PC-3 (cell line): ENCODE measurements at regions of chr14 and their contacts with region 1.

Region 1: GRCh38 chr14:51828017-51828797 is 32.2 kb upstream of the GNG2 start:
- DNase-seq: peak; percentile 94
- ATAC-seq: peak; percentile 98
- H3K4me3 ChIP-seq: peak overlapping the region; percentile 54; the same call in 1 of the 2 replicates
- H3K27ac ChIP-seq: peak overlapping the region; percentile 95
- H3K4me1 ChIP-seq: peaks cover 31% of the 10 kb centered on the region
- H3K27me3 ChIP-seq: no peaks in the 10 kb centered on the region
- CTCF ChIP-seq: peak; percentile 22; the same call in 1 of the 2 replicates

Region 2: DNA sequence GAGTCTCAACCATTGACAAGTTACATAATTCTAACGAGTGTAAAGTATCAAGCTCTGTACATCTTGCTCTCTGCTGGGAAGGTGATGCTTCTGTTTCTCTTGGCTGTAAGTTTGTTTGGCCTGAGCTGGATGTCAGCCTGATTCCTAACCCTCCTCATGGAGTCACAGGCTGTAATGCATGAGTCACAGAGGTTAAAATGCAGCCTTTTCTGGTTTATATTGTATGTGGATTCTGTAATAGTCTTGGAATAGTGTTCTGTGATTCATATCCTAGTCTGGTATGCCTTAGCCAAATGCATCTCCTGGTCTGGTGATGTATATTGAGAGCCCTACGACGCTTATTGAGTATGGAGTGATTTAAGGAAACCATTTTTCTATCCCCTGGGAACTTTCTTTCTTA is 280.9 kb before region 1 on chr14:
- CTCF ChIA-PET with region 1: no interaction called
- POLR2A ChIA-PET with region 1: interaction called, 14 read pairs
- intact Hi-C with region 1: no loop called
- DNase-seq: peak; percentile 99
- ATAC-seq: peak; percentile 93
- H3K4me3 ChIP-seq: peak overlapping the region; percentile 9; the same call in 1 of the 2 replicates
- H3K27ac ChIP-seq: peak overlapping the region; percentile 91
- H3K4me1 ChIP-seq: peaks cover 54% of the 10 kb centered on the region
- H3K27me3 ChIP-seq: no peaks in the 10 kb centered on the region
- CTCF ChIP-seq: no peak

Region 3: GRCh38 chr14:51677266-51677665 is 150.9 kb before region 1 on chr14:
- CTCF ChIA-PET with region 1: no interaction called
- POLR2A ChIA-PET with region 1: no interaction called
- intact Hi-C with region 1: no loop called
- DNase-seq: no peak
- ATAC-seq: no peak
- H3K4me3 ChIP-seq: no peak overlapping the region
- H3K27ac ChIP-seq: no peak overlapping the region
- H3K4me1 ChIP-seq: peaks cover 20% of the 10 kb centered on the region; the same call in 1 of the 2 replicates
- H3K27me3 ChIP-seq: no peaks in the 10 kb centered on the region
- CTCF ChIP-seq: no peak

Region 4: DNA sequence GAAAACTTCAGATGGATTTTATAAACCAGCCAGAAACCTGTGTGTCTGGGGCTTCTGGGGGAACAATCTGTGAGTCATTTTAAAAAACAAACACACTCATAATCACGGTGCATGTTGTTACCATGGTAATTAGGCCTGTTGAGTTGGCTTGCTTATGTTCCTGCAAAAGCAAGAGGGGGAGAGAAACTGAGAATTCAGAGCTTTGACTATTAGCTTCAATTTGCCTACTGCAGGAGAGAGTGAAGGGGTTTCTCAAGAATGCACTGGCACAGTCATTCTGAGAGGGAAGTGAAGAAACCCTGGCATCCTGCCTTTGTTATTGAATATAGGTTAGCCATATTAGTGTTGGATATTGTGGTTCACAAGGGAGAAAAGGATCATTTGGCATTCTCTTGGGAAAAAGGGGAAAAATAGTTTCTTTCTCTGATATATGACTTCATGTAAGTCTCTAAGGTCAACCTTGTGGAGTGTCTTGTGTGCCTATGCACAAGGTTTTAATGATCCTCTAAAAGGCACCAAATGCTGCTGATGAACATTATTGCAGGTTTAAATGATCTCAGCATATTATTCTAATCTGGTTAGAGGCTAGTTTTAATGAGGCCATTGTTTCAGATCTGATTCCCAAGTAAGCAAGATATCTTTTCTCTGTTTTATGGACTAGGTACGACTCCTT is 45.1 kb after region 1 on chr14:
- CTCF ChIA-PET with region 1: interaction called, 6 read pairs
- POLR2A ChIA-PET with region 1: interaction called, 3 read pairs
- intact Hi-C with region 1: loop called (anchors 1 kb)
- DNase-seq: peak; percentile 97
- ATAC-seq: peak; percentile 93
- H3K4me3 ChIP-seq: peak overlapping the region; percentile 20; the same call in 1 of the 2 replicates
- H3K27ac ChIP-seq: peak overlapping the region; percentile 92
- H3K4me1 ChIP-seq: peaks cover 26% of the 10 kb centered on the region
- H3K27me3 ChIP-seq: no peaks in the 10 kb centered on the region
- CTCF ChIP-seq: no peak

Region 5: GRCh38 chr14:51979088-51979709 is 151.0 kb after region 1 on chr14:
- CTCF ChIA-PET with region 1: interaction called, 19 read pairs
- POLR2A ChIA-PET with region 1: no interaction called
- intact Hi-C with region 1: loop called (anchors 1 kb)
- DNase-seq: peak; percentile 93
- ATAC-seq: peak; percentile 96
- H3K4me3 ChIP-seq: no peak overlapping the region
- H3K27ac ChIP-seq: no peak overlapping the region
- H3K4me1 ChIP-seq: no peaks in the 10 kb centered on the region
- H3K27me3 ChIP-seq: no peaks in the 10 kb centered on the region
- CTCF ChIP-seq: peak; percentile 97

Region 6: GRCh38 chr14:52146504-52146903 is 318.3 kb after region 1 on chr14:
- CTCF ChIA-PET with region 1: no interaction called
- POLR2A ChIA-PET with region 1: no interaction called
- intact Hi-C with region 1: loop called (anchors 10 kb)
- DNase-seq: peak; percentile 24
- ATAC-seq: peak; percentile 42
- H3K4me3 ChIP-seq: no peak overlapping the region
- H3K27ac ChIP-seq: no peak overlapping the region
- H3K4me1 ChIP-seq: no peaks in the 10 kb centered on the region
- H3K27me3 ChIP-seq: 0 out of 2 replicates have a peak, but pooled peaks cover 5% of the 10 kb centered on the region
- CTCF ChIP-seq: peak; percentile 61